Aorta (tissue), 5 donors: ENCODE measurements at regions of chr17 and their contacts with region 1.

Region 1: DNA sequence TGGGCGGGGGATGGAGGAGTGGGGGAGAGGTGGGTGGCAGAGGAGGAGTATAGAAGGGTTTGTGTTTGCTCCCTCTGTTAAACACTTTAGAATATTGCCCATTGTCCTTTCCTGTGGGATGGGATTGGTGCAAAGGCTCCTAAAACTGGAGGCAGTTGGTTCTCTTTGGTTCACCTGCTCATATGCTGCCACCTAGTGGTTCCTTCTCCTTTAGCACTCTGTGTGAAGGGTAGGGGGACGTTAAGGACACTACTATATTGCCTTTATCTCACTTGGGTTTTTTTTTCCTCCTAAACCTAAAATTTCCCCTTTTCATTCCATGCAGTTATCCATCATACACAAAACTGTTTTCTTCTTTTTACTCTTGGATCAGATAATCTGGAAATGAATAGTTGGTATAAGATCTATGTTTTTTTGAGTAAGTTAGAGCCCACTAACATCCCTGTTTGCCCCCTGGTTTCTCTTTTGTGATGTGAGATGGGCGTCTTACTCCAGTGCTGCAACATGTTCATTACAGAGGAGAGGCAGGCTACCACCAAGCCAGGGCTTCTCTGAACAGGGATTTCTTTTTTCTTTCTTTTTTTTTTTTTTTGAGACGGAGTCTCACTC is 23.8 kb downstream of the SNX11 start:
- DNase-seq: no peak
- ATAC-seq: peak; percentile 86
- H3K4me3 ChIP-seq: no peak overlapping the region
- H3K27ac ChIP-seq: no peak overlapping the region
- H3K4me1 ChIP-seq: no peaks in the 10 kb centered on the region
- H3K27me3 ChIP-seq: no peaks in the 10 kb centered on the region

Region 2: DNA sequence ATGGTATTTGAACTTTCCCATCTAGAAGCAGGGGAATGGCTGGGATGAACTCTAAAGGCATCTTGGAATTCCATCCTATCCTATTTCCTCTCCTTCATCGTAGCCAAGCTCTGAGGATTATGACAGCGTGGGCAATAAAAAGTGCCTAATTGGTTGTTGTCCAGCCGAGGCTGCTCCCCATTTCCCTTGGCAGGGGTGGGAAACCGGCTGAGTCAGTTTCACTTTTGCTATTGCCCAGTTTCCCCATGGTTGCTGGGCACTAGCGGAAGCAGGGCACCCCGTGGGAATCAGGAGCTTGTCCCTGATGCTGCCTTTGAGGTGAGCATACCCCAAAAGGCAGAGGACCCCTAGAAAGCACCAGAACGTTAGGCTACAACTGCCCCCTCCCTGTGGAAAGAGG is 249.1 kb before region 1 on chr17:
- intact Hi-C with region 1: no loop called
- DNase-seq: peak; percentile 63 to 76
- ATAC-seq: no peak
- H3K4me3 ChIP-seq: no peak overlapping the region
- H3K27ac ChIP-seq: no peak overlapping the region
- H3K4me1 ChIP-seq: no peaks in the 10 kb centered on the region
- H3K27me3 ChIP-seq: no peaks in the 10 kb centered on the region

Region 3: GRCh38 chr17:47978324-47978723 is 153.0 kb before region 1 on chr17:
- intact Hi-C with region 1: loop called in 1 of 2 experiments (anchors 2 kb)
- DNase-seq: peak; percentile 72 to 79
- ATAC-seq: peak; percentile 46
- H3K4me3 ChIP-seq: no peak overlapping the region
- H3K27ac ChIP-seq: no peak overlapping the region
- H3K4me1 ChIP-seq: no peaks in the 10 kb centered on the region
- H3K27me3 ChIP-seq: no peaks in the 10 kb centered on the region

Region 4: GRCh38 chr17:48074315-48075081 is 56.8 kb before region 1 on chr17:
- intact Hi-C with region 1: loop called in 1 of 2 experiments (anchors 5 kb)
- DNase-seq: peak; percentile 82 to 86
- ATAC-seq: peak; percentile 85
- H3K4me3 ChIP-seq: no peak overlapping the region
- H3K27ac ChIP-seq: no peak overlapping the region
- H3K4me1 ChIP-seq: no peaks in the 10 kb centered on the region
- H3K27me3 ChIP-seq: no peaks in the 10 kb centered on the region